Cardiac septum (tissue), 1 donor: ENCODE measurements at regions of chr6 and their contacts with region 1.

Region 1: DNA sequence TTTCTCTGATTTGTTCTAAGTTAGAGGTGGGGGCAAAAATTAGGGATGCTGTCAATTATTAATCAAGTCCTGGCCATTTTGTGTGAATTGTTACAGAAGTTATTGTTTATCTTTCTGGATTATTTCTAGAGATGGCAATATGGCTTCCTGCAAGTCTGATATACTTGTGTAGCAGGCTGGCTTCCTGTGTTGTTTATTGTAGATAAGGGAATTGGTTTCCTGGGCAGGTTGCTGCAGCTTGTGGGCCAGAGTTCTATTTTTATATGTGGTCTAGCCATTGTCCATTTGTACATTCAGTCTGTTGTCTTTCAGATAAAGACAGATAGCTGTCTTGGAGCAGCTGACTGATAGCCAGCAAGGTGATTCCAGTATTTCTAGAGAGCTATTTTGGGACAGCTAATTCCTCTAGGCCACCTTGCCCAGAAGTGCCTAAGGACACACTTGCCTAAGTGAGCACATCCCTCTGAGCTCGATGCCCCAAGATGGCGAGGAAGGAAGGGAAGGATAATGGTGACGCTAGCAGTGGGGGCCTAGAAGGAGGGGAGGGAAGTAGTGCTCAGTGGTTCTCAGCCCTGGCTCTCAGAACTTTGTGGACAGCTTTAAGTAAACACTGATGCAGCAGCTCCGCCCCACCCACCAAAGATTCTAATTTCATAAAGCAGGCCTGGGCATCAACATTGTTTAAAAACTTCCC is 25.5 kb downstream of the DDO start:
- DNase-seq: no peak

Region 2: DNA sequence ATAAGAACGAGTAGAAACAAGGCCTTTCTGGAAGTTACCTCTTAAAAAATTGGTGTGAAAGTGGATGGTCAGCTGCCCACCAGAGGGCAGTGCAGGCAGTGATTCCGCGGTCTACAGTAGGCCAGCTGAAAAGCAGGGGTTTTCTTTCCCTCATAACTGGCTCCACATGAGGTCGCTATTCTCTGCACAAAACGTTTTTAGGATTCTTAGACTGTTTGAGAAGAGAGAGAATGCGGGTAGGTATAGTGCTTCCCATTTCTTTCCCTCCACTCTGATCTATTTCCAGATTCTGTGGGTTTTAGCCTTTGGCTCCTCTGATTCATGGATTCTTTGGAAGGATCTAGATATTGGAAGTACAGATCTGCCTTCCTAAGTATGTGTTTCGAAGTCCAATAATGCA is 684.6 kb before region 1 on chr6:
- intact Hi-C with region 1: loop called (anchors 5 kb)
- DNase-seq: peak; percentile 85